Calu3 (cell line): ENCODE measurements at regions of chr7 and their contacts with region 1.

Region 1: GRCh38 chr7:11153694-11154093 is 180.0 kb downstream of the PHF14 start:
- DNase-seq: no peak
- H3K4me3 Mint-ChIP-seq: no peak overlapping the region
- H3K27ac Mint-ChIP-seq: no peak overlapping the region
- H3K4me1 Mint-ChIP-seq: no peaks in the 10 kb centered on the region
- H3K27me3 Mint-ChIP-seq: no peaks in the 10 kb centered on the region
- CTCF ChIP-seq: no peak

Region 2: GRCh38 chr7:11127114-11127835 is 26.4 kb before region 1 on chr7:
- CTCF ChIA-PET with region 1: no interaction called
- intact Hi-C with region 1: loop called (anchors 1 kb)
- DNase-seq: no peak
- H3K4me3 Mint-ChIP-seq: no peak overlapping the region
- H3K27ac Mint-ChIP-seq: no peak overlapping the region
- H3K4me1 Mint-ChIP-seq: no peaks in the 10 kb centered on the region
- H3K27me3 Mint-ChIP-seq: no peaks in the 10 kb centered on the region
- CTCF ChIP-seq: no peak

Region 3: DNA sequence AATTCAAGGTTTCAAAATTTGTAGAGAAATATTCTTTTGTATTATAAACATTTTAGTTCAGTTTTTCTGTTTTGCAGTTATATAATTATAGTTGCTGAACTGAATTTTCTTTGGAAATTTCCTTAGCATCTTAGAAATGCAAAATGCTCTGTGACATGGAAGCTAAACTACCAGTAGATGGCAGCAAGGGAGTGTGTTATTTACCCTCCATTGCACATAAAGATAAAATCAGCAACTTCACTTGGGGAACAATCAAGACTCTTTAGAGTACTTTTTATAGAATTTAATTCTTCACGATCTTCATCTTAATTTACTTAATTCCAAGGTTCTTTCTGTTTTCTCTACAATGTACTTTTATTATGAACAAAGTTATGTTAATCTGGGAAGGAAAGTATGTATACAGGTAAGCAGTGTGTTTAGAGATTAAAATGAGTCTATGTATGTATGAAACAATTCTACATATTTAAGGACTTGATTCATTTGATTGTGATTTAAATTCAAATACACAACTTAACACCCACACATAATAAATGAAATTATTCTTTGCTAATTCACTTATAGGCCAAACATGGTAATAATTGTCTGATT is 274.1 kb after region 1 on chr7:
- CTCF ChIA-PET with region 1: no interaction called
- intact Hi-C with region 1: no loop called
- DNase-seq: peak; percentile 30
- H3K4me3 Mint-ChIP-seq: no peak overlapping the region
- H3K27ac Mint-ChIP-seq: no peak overlapping the region
- H3K4me1 Mint-ChIP-seq: no peaks in the 10 kb centered on the region
- H3K27me3 Mint-ChIP-seq: no peaks in the 10 kb centered on the region
- CTCF ChIP-seq: peak; percentile 65